ENCODE measurements at regions of chr22 and their contacts with region 1.

Region 1: GRCh38 chr22:41237707-41238569 is 2.8 kb downstream of the CHADL start:
- DNase-seq: peak; percentile 89
- H3K4me3 Mint-ChIP-seq: no peak overlapping the region
- H3K27ac Mint-ChIP-seq: no peak overlapping the region
- H3K4me1 Mint-ChIP-seq: peaks cover 11% of the 10 kb centered on the region
- H3K27me3 Mint-ChIP-seq: no peaks in the 10 kb centered on the region

Region 2: DNA sequence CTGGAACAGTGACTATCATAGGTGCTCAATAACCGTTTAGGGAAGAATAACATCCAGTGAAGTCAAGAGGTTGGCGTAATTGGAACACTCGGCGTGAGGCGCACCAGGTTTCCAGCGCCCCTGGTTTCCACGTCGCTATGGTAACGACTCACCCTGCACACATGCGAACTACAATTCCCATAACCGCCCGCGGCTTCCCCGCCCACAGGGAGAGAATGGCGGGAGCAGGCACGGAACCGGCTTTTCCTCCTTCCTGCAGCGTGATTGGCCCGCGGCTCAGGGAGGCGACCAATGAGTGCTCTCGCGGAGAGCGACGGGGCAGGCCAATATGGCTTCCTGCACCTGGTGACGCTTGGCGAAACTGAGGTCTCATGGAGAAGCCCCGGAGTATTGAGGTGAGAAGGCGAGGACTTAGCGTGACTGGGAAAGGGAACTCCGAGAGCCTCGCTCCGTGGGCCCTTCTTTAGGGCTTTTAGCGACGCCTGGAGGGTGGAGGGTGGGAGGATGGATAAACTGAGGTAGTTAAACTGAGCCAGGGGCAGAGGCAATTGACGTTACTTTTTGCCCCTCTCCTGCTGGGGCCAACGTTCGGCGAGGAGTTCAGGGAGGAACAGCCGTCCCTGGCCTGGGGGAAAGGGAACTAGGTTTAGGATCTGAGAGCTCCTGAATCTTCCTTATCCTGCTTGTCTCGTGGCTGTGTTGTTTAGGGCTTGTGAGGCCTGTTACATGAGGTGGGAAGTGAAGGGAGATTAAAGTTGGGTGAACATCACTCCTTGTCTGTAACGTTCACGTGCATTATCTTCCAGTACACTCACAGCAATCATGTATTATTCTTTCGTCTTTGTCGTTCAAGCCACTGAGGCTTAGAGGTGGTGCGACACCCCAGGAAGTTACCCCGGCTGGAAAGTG is 32.7 kb before region 1 on chr22 and contains the start of gene L3MBTL2:
- CTCF ChIA-PET with region 1: interaction called, 14 read pairs
- POLR2A ChIA-PET with region 1: no interaction called
- intact Hi-C with region 1: no loop called
- DNase-seq: peak; percentile 99
- H3K4me3 Mint-ChIP-seq: peak within 1 kb of the TSS; percentile 95
- H3K27ac Mint-ChIP-seq: peak within 1 kb of the TSS; percentile 92
- H3K4me1 Mint-ChIP-seq: peaks cover 26% of the 10 kb centered on the region
- H3K27me3 Mint-ChIP-seq: no peaks in the 10 kb centered on the region
- total RNA-seq, gene L3MBTL2: 27.3 to 31.0 TPM

Region 3: GRCh38 chr22:41217553-41218157 is 20.3 kb before region 1 on chr22:
- CTCF ChIA-PET with region 1: interaction called, 21 read pairs
- POLR2A ChIA-PET with region 1: interaction called, 3 read pairs
- intact Hi-C with region 1: no loop called
- DNase-seq: peak; percentile 56
- H3K4me3 Mint-ChIP-seq: peak overlapping the region; percentile 34
- H3K27ac Mint-ChIP-seq: peak overlapping the region; percentile 70
- H3K4me1 Mint-ChIP-seq: peaks cover 19% of the 10 kb centered on the region
- H3K27me3 Mint-ChIP-seq: no peaks in the 10 kb centered on the region

Region 4: GRCh38 chr22:41226723-41227655 is 10.9 kb before region 1 on chr22:
- CTCF ChIA-PET with region 1: interaction called, 18 read pairs
- POLR2A ChIA-PET with region 1: no interaction called
- intact Hi-C with region 1: no loop called
- DNase-seq: no peak
- H3K4me3 Mint-ChIP-seq: no peak overlapping the region
- H3K27ac Mint-ChIP-seq: no peak overlapping the region
- H3K4me1 Mint-ChIP-seq: no peaks in the 10 kb centered on the region
- H3K27me3 Mint-ChIP-seq: no peaks in the 10 kb centered on the region